ENCODE measurements at regions of chr1 and their contacts with region 1.

Region 1: GRCh38 chr1:1173793-1174415 is at the start of gene TTLL10:
- DNase-seq: peak in 1 of 2 donors; percentile 80
- H3K4me3 ChIP-seq: no peak within 1 kb of the TSS
- H3K27ac ChIP-seq: no peak within 1 kb of the TSS
- H3K4me1 ChIP-seq: peaks cover 5 to 32% (median 19%) of the 10 kb centered on the region in 4 donors
- H3K27me3 ChIP-seq: peaks cover 0 to 94% (median 26%) of the 10 kb centered on the region in 3 donors
- CTCF ChIP-seq: no peak
- EP300 ChIP-seq: no peak
- POLR2A ChIP-seq: no peak
- total RNA-seq, gene TTLL10: 6.4 TPM in 1 of 5 donors, not detected in the others

Region 2: DNA sequence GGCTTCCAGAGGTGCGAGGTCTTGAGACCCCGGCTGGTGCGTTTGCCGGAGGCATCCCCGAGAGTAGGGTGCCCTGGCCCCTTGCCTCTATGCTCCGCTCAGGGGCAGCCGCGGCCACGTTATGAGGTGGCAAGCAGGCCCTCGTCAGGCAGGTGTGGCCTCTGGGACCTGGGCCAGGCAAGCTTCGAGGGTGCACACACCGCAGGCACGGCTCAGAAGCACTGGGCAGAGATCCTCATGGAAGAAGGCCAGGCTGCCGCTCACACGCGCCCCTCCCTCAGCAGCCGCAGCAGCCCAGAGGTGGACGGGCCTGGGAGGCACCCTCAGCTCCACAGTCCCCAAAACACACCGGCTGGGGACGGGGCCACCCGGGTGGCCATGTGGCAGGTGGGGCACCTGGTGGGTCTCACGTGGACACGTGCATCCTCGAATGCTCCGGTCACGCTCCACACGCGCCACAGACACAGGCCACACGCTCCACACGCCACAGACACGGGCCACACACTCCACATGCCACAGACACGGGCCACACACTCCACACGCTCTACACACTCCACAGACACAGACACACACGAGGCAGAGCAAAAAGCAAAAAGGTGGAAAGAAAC is 51.4 kb after region 1 on chr1:
- intact Hi-C with region 1: loop called (anchors 10 kb)
- DNase-seq: peak in 1 of 2 donors; percentile 89
- H3K4me3 ChIP-seq: no peak overlapping the region
- H3K27ac ChIP-seq: peak overlapping the region in 2 of 5 donors; percentile 2 to 9
- H3K4me1 ChIP-seq: peaks cover 11 to 72% (median 44%) of the 10 kb centered on the region in 4 donors
- H3K27me3 ChIP-seq: no peaks in the 10 kb centered on the region
- CTCF ChIP-seq: no peak
- EP300 ChIP-seq: no peak
- POLR2A ChIP-seq: no peak

Measured in stomach (tissue), 19 donors.